Sigmoid colon (tissue), 7 donors: ENCODE measurements at regions of chr5 and their contacts with region 1.

Region 1: GRCh38 chr5:166980666-166981065 is 1310.8 kb upstream of the WWC1 start:
- DNase-seq: no peak
- H3K4me3 ChIP-seq: peak overlapping the region; percentile 10 to 64 (median 60)
- H3K27ac ChIP-seq: peak overlapping the region; percentile 53 to 84 (median 77)
- H3K4me1 ChIP-seq: peaks cover 0 to 21% (median 9%) of the 10 kb centered on the region in 4 donors
- H3K27me3 ChIP-seq: no peaks in the 10 kb centered on the region
- CTCF ChIP-seq: no peak
- EP300 ChIP-seq: no peak
- POLR2A ChIP-seq: no peak

Region 2: GRCh38 chr5:167217097-167217743 is 236.6 kb after region 1 on chr5:
- intact Hi-C with region 1: loop called (anchors 10 kb)
- DNase-seq: no peak
- H3K4me3 ChIP-seq: no peak overlapping the region
- H3K27ac ChIP-seq: no peak overlapping the region
- H3K4me1 ChIP-seq: no peaks in the 10 kb centered on the region
- H3K27me3 ChIP-seq: no peaks in the 10 kb centered on the region
- CTCF ChIP-seq: peak in 1 of 4 experiments; percentile 12
- EP300 ChIP-seq: no peak
- POLR2A ChIP-seq: no peak